ENCODE measurements at regions of chr4 and their contacts with region 1.

Region 1: GRCh38 chr4:183256756-183257385 is 63.2 kb downstream of the CLDN22 start:
- DNase-seq: peak in 1 of 2 experiments; percentile 73
- H3K4me3 ChIP-seq: no peak overlapping the region
- H3K27ac ChIP-seq: no peak overlapping the region
- H3K4me1 ChIP-seq: peaks cover 0 to 4% (median 0%) of the 10 kb centered on the region in 4 experiments; a peak in 1 of 7 replicates
- H3K27me3 ChIP-seq: no peaks in the 10 kb centered on the region
- CTCF ChIP-seq: peak; percentile 84 to 89 (median 88)
- EP300 ChIP-seq: no peak
- POLR2A ChIP-seq: no peak
- RAD21 ChIP-seq: peak; percentile 77 to 78

Region 2: DNA sequence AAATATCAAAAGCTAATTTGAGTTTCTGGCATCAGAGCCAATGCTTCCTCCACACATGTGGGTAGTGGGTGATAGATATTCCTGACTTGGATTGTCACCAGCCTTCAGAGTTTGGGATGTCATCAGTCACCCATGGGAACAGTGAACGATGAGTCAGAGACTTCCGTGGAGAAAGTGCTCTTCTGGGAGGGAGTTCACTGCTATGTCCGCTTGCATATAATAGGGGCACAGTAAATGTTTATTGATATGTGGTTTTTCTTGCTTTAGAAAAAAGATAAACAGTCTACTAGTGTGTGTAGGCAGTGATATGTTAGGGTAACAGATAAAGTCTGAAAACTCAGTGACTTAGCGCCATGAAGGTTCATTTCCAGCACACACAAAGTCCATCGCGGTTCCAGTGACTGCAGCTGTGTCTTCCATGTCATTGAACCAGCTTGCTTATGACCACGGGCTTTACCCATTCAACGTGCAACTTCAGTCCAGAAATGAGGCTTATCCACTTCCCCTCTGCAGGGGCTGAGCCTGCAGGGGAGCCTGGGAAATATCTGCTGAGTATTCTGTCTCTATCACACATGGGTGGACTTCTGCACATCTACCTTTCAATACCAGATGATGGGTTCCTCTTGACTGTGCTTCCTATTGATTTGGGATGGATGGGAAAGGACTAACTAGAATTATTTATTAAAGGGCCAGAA is 245.5 kb before region 1 on chr4:
- CTCF ChIA-PET with region 1: interaction called, 69 read pairs
- POLR2A ChIA-PET with region 1: no interaction called
- DNase-seq: peak in 1 of 2 experiments; percentile 13
- H3K4me3 ChIP-seq: no peak overlapping the region
- H3K27ac ChIP-seq: no peak overlapping the region
- H3K4me1 ChIP-seq: peaks cover 0 to 4% (median 2%) of the 10 kb centered on the region in 4 experiments; a peak in 2 of 7 replicates
- H3K27me3 ChIP-seq: peaks cover 0 to 2% (median 0%) of the 10 kb centered on the region in 4 experiments; a peak in 3 of 7 replicates
- CTCF ChIP-seq: no peak
- EP300 ChIP-seq: no peak
- POLR2A ChIP-seq: no peak
- RAD21 ChIP-seq: no peak